CD14-positive monocyte (primary cell): ENCODE measurements at regions of chr17 and their contacts with region 1.

Region 1: GRCh38 chr17:18033442-18034099 is 5.4 kb downstream of the ATPAF2 start:
- DNase-seq: peak; percentile 77 to 90 (median 85)
- H3K4me3 ChIP-seq: no peak overlapping the region
- H3K4me3 Mint-ChIP-seq: no peak overlapping the region
- H3K27ac ChIP-seq: peak overlapping the region in 1 of 2 donors; percentile 36
- H3K27ac Mint-ChIP-seq: peak overlapping the region; percentile 69 to 85 (median 77)
- H3K4me1 ChIP-seq: peaks cover 34 to 44% of the 10 kb centered on the region in 2 donors
- H3K4me1 Mint-ChIP-seq: peaks cover 46% of the 10 kb centered on the region
- H3K27me3 ChIP-seq: no peaks in the 10 kb centered on the region
- H3K27me3 Mint-ChIP-seq: no peaks in the 10 kb centered on the region
- CTCF ChIP-seq: peak; percentile 74

Region 2: DNA sequence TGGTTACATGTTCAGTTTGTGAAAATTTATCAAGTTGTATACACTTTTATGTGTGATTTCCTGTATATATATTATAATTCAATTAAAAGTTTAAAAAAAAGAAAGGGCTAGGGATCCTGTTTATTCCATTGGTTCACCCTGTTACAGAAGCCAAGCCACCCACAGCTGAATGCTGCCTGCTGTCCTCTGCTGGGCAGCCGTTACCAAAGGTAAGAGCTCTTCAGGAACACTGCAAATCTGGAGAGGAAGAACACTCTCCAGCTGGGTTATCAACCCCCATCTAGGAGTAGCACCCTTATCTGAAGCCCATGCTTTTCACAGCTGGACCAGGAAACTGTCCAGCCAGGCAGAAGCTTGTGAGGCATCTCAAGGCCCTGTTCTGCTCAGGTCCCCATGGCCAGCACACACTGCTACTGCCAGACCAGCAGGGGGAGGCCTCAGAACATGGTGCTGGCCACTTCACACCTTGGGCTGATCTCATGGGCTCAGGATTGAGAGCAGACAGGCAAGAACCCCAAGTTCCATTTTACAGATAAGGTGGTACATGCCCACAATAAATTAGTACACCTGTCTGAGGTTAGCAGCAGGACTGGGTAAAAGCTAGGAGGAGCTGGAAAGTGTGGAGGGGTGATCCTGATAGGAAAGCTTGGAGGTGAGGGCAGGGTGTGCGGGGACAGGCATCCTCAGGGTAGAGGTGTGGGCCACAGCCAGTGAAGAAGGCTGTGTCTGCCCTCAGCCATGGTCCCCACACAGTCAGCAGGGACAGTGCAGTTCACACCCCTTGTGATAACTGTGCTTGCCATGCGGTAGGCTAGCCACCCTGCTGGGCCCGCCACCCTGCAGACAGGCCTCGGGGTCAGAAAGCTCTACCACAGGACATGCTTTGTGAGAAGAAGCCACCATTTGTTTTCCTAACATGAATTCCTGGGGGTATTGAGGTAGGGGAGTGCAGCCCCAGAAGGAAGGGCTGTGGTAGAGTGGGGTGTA is 142.5 kb before region 1 on chr17:
- intact Hi-C with region 1: loop called (anchors 1 kb)
- DNase-seq: peak; percentile 22 to 51 (median 42)
- H3K4me3 ChIP-seq: no peak overlapping the region
- H3K4me3 Mint-ChIP-seq: no peak overlapping the region
- H3K27ac ChIP-seq: no peak overlapping the region
- H3K27ac Mint-ChIP-seq: peak overlapping the region in 2 of 7 donors; percentile 36 to 51
- H3K4me1 ChIP-seq: no peaks in the 10 kb centered on the region
- H3K4me1 Mint-ChIP-seq: no peaks in the 10 kb centered on the region
- H3K27me3 ChIP-seq: no peaks in the 10 kb centered on the region
- H3K27me3 Mint-ChIP-seq: peaks cover 0 to 3% (median 2%) of the 10 kb centered on the region in 3 donors
- CTCF ChIP-seq: peak; percentile 69

Region 3: DNA sequence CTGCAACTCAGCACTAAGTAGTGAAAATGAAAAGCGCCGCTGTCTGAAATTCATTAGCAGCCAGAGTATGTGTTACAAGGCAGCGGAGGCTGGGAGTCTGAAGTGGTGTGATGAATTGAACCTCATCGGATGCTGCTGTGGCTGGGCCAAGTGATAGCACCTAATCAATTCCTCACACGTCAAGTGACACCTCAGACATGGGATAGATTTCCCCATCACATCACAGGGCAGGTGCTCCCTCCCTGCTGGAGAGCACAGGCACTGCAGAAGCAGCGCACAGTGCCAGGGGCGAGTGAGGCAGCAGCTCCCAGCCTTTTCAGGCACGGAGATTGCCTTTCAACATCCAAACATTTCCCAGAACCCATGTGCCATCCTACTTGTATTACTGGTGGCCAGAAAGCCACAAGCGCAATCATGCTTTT is 28.7 kb before region 1 on chr17:
- intact Hi-C with region 1: no loop called
- DNase-seq: no peak
- H3K4me3 ChIP-seq: no peak overlapping the region
- H3K4me3 Mint-ChIP-seq: no peak overlapping the region
- H3K27ac ChIP-seq: no peak overlapping the region
- H3K27ac Mint-ChIP-seq: no peak overlapping the region
- H3K4me1 ChIP-seq: no peaks in the 10 kb centered on the region
- H3K4me1 Mint-ChIP-seq: no peaks in the 10 kb centered on the region
- H3K27me3 ChIP-seq: no peaks in the 10 kb centered on the region
- H3K27me3 Mint-ChIP-seq: no peaks in the 10 kb centered on the region
- CTCF ChIP-seq: no peak